ENCODE measurements at regions of chr7 and their contacts with region 1.

Region 1: DNA sequence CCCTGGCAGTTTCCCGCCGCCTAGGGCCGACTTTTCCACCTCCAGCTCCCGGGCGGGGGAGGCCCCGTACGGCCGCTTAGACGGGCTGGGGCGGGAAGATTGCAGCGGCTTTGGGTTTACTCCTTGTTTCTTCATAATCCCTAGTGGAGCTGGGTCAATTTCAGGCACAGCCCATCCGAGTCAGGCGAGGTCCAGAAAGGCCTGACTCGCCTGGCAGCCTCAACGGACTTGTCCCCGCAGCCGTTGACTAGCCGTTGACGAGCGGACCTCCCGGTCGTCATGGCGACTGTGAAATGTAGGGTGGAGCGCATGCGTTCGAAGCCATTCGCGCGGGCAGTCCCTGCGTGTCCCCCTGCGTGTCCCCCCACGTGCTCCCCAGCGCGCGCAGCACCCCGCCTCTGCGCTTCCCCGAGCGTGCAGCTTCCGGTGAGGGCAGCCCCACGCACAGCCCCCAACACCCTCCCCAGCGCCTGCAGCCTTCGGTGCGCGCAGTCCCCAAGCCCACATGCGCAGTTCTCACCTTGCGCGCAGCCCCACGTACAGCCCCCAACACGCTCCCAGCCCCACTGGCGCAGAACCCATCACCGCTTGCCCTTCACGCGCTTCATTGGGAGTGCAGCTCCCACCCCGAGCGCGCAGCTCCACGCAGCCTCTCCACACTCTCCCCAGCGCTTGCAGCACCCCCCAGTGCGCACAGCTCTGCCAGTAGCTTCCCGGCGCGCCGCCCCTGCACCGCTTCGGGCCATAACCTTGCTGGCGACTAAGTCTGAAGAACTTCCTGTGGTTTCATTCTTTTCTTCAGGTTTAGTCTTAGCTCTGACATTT is 67.8 kb downstream of the TBX20 start:
- DNase-seq: no peak
- H3K4me3 ChIP-seq: no peak overlapping the region
- H3K4me3 Mint-ChIP-seq: no peak overlapping the region
- H3K27ac Mint-ChIP-seq: no peak overlapping the region
- H3K4me1 ChIP-seq: no peaks in the 10 kb centered on the region
- H3K4me1 Mint-ChIP-seq: no peaks in the 10 kb centered on the region
- H3K27me3 ChIP-seq: no peaks in the 10 kb centered on the region
- H3K27me3 Mint-ChIP-seq: peaks cover 10% of the 10 kb centered on the region
- CTCF ChIP-seq: no peak

Region 2: GRCh38 chr7:35424869-35425495 is 238.9 kb after region 1 on chr7:
- CTCF ChIA-PET with region 1: no interaction called
- POLR2A ChIA-PET with region 1: no interaction called
- intact Hi-C with region 1: loop called (anchors 5 kb)
- DNase-seq: peak; percentile 53 to 71
- H3K4me3 ChIP-seq: no peak overlapping the region
- H3K4me3 Mint-ChIP-seq: no peak overlapping the region
- H3K27ac Mint-ChIP-seq: no peak overlapping the region
- H3K4me1 ChIP-seq: no peaks in the 10 kb centered on the region
- H3K4me1 Mint-ChIP-seq: no peaks in the 10 kb centered on the region
- H3K27me3 ChIP-seq: no peaks in the 10 kb centered on the region
- H3K27me3 Mint-ChIP-seq: peaks cover 12% of the 10 kb centered on the region
- CTCF ChIP-seq: peak; percentile 79 to 87

Measured in Caco-2 (cell line).